Right ventricle myocardium inferior (tissue), 1 donor: ENCODE measurements at regions of chr9 and their contacts with region 1.

Region 1: DNA sequence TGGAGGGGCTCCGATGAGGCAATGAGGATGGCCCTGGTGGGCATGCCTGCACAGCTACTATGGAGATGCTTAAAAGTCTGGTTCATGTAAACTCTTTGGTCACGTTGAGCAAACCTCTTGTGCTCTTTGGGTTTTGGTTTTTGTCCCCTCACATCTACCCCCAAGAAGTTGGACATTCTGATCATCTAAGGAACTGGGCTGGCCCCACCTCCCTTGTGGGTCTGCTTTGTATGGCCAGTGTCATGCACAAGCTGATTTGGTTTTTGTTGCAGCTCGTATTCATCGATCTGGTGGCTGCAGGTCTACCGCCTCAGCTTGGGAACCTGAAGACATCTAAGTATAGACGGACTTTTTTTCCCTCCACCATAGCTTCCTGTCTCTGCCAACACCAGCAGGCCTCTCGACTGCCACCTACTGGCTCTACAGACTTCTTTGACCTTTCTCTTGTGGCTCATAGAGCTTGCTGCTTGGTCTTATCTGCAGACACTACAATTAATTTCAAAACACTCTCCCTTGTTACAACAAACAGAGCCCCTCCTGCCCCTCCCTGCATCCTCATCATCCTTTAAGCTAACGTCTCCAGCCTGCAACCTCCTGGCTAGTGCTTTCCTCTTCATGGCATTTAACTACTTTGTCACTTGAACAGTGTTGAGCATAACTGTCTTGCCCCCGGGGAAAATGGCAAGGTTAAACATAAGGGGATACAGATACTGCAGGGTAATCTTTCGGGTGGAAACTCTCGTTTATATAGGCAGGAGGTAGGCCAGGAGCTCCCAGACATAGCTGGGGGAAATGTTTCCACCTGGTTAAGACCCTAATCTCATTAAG is 34.5 kb downstream of the TSTD2 start:
- DNase-seq: no peak
- ATAC-seq: peak; percentile 56

Region 2: GRCh38 chr9:97501177-97501971 is 97.3 kb before region 1 on chr9 and contains the start of gene TMOD1:
- intact Hi-C with region 1: loop called (anchors 1 kb)
- DNase-seq: peak; percentile 84
- ATAC-seq: peak; percentile 84
- total RNA-seq, gene TMOD1: 192 TPM

Region 3: DNA sequence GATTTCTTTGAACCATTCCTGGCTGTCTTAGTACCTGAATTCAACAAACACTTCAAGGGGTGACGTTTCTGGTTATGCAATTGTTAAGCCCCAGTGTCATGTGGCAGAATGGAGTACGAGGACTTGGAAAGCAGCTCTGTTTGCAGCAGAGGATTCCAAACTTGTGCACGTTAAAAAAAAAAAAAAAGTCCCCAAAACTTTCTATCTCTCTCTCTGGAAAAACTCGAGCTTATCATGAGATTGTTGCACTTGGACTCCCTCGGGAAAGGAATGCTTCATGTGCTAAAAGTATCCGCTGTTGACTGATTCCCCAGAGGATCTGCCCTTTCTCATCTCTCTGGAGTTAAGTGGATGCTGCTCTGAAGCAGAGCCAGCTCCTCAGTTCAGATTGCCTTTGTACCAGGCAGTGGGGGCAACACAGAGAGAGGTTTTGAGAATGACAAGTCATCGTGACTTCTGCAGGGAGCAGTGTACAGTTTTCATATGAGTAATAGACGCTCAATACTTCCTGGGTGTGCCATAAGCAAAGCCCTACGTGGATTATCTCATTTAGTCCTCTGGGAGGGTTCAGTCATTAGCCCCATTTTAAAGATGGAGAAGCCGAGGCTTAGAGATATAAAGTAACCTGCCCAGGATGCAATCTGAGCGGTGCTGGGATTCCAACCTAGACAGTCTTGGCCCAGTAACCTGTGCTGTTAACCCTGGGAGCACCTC is 69.2 kb before region 1 on chr9:
- intact Hi-C with region 1: loop called (anchors 5 kb)
- DNase-seq: no peak
- ATAC-seq: peak; percentile 85

Region 4: DNA sequence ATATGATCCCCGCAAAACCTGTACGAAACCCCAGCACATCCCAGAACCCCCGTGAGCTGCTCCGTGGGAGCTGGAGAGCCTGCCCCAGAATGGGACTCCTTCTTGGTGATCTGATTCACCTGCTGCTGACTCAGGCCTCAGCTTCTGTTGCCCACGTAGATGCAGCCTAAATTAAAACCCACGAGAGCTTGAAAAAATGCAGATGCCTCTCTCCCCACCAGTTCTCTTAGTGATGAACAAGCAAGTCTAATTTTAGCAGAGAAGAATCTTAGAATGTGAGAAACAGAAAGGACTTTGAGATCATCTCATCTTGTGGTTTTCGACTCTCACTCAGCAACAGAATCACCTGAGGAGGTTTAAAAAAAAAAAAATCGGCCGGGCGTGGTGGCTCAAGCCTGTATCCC is 39.6 kb before region 1 on chr9:
- intact Hi-C with region 1: loop called (anchors 2 kb)
- DNase-seq: no peak
- ATAC-seq: no peak

Region 5: DNA sequence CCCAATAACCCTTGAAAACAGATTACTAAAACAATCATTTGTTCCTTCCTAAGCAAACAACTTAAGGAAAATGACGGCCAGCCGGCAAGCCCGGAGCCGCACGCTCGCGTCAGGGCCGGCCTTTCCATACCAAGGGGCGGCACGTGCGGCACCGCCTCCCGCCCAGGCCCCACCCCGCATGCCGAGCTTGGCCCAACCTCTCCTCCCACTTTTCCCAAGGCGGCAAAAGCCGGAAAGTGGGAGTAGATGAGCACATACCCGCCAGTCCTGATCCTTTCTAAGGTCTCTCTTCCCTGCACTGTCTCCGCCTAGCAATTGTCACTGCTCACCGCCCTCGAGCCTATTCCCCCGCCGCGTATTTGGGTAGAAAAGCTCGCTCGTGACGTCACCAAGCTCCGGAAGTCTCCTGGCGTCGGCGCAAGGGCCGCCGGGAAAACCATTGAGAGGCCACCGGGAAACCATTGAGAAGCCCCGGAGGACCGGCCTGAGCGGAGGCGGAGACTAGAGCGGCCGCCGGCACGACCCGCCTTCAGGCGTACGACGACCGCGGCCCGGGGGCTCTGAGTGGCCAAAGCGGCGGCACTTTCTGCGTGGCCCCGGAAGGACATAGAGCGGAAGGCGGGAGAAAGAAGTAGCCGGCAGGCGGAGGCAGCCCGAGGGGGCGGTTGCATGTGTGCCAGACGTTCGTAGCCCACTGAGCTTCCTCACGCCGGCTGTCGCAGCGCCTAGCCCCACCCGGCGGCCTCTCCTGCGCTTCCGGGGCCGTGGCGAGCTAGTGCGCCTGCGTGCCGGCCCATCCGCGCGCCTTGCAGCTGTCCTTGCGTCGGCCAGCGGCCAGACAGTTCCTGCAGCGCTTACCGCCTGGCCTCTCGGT is 34.5 kb after region 1 on chr9 and contains the starts of genes NCBP1 and TSTD2:
- intact Hi-C with region 1: loop called (anchors 2 kb)
- DNase-seq: peak; percentile 99
- ATAC-seq: peak; percentile 95
- total RNA-seq, gene NCBP1: 20.0 TPM
- total RNA-seq, gene TSTD2: 24.8 TPM

Region 6: DNA sequence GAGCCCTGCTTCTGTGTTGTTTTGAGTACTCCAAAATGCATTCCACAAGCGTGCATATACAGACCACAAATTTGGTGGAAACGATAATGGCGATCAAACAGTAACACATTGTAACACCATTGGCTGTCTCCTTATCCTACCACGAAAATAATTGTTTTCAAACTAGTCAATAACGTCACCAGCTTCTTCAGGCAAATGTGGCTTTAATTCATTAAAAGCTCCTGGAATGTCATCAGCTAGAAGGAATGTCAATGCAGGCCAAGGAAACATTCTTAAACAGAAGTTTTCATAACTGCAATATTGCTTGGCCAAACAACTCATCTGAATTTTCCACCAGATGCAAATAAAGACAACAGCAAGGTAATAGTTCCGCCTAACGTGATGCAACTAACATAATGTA is 170.1 kb after region 1 on chr9:
- intact Hi-C with region 1: no loop called
- DNase-seq: no peak
- ATAC-seq: no peak

Region 7: DNA sequence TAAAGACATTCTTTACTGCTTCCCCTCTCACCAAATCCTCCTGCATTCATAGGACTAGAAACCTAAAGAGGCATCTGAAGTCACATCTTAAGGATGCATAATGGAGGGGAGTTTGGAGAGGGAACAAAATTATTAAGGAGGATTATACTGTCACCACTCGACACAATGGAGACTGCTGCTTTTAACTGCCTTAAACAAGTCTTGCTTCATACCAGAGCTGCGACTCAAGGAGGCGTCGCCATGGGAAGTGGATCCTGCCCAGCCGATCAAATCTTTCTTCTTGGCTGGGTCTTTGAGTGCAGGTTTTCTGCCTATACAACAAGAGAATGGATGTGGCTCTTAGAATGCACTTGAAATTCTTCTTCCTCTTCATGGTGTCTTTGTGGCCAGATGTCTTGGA is 187.7 kb after region 1 on chr9:
- intact Hi-C with region 1: no loop called
- DNase-seq: no peak
- ATAC-seq: no peak

Region 8: GRCh38 chr9:98010445-98010844 is 411.8 kb after region 1 on chr9:
- intact Hi-C with region 1: no loop called
- DNase-seq: no peak
- ATAC-seq: no peak